ENCODE measurements at regions of chr22 and their contacts with region 1.

Region 1: GRCh38 chr22:44080936-44081861 is 57.1 kb downstream of the PARVB start:
- DNase-seq: peak; percentile 43
- ATAC-seq: peak; percentile 77; the same call in 1 of the 2 replicates
- H3K4me3 ChIP-seq: no peak overlapping the region
- H3K27ac ChIP-seq: no peak overlapping the region
- H3K4me1 ChIP-seq: no peaks in the 10 kb centered on the region
- H3K27me3 ChIP-seq: no peaks in the 10 kb centered on the region
- CTCF ChIP-seq: peak; percentile 91

Region 2: GRCh38 chr22:43993027-43993760 is 88.0 kb before region 1 on chr22:
- CTCF ChIA-PET with region 1: interaction called, 31 read pairs
- POLR2A ChIA-PET with region 1: no interaction called
- in situ Hi-C with region 1: no loop called
- intact Hi-C with region 1: loop called (anchors 5 kb)
- DNase-seq: peak; percentile 46
- ATAC-seq: peak; percentile 77
- H3K4me3 ChIP-seq: no peak overlapping the region
- H3K27ac ChIP-seq: no peak overlapping the region
- H3K4me1 ChIP-seq: no peaks in the 10 kb centered on the region
- H3K27me3 ChIP-seq: no peaks in the 10 kb centered on the region
- CTCF ChIP-seq: peak; percentile 88

Measured in Panc1 (cell line).